PC-3 (cell line): ENCODE measurements at regions of chr5 and their contacts with region 1.

Region 1: GRCh38 chr5:111757355-111758283 is 625 bp upstream of the NREP start:
- DNase-seq: peak; percentile 90
- ATAC-seq: peak; percentile 71
- H3K4me3 ChIP-seq: peak overlapping the region; percentile 91
- H3K27ac ChIP-seq: peak overlapping the region; percentile 76
- H3K4me1 ChIP-seq: peaks cover 34% of the 10 kb centered on the region
- H3K27me3 ChIP-seq: no peaks in the 10 kb centered on the region
- CTCF ChIP-seq: peak; percentile 41

Region 2: GRCh38 chr5:111194925-111195324 is 562.7 kb before region 1 on chr5:
- CTCF ChIA-PET with region 1: no interaction called
- POLR2A ChIA-PET with region 1: no interaction called
- intact Hi-C with region 1: no loop called
- DNase-seq: no peak
- ATAC-seq: no peak
- H3K4me3 ChIP-seq: no peak overlapping the region
- H3K27ac ChIP-seq: no peak overlapping the region
- H3K4me1 ChIP-seq: no peaks in the 10 kb centered on the region
- H3K27me3 ChIP-seq: peaks cover 58% of the 10 kb centered on the region
- CTCF ChIP-seq: no peak

Region 3: DNA sequence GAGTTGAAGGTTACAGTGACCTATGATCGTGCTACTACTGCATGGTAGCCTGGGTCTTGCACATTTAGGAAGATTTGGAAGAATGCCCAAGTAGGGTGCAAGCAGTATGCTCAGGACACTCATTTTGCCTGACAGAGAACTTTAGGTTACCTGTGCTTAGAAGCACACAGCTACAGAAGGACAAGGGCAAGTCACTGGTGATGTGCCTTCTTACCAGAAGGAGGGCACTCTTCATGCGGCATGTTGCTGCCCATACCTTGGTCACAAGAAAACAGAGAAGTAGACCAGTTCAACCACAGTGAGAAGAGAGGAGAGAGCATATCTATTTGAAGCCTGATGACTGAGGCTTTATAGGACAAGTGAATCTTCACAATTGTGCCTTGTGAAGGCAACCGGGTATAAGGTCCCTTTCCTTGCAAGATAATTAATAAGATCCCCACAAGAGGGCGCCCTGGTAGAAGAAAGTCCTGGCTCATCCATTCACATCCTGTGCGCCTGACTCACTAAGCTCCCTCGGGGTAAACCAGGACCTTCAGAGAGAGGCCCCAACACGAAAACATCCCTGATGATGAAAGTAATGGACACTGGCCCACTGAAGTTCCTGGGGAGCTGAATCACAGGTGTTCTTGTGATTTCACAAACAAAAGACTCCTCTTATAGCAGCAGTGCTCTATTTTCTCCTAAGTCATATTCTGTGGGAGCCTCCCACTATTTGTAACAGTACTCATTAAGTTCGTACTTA is 207.2 kb before region 1 on chr5:
- CTCF ChIA-PET with region 1: interaction called, 5 read pairs
- POLR2A ChIA-PET with region 1: interaction called, 3 read pairs
- intact Hi-C with region 1: loop called (anchors 1 kb)
- DNase-seq: peak; percentile 97
- ATAC-seq: peak; percentile 89
- H3K4me3 ChIP-seq: no peak overlapping the region
- H3K27ac ChIP-seq: peak overlapping the region; percentile 54
- H3K4me1 ChIP-seq: peaks cover 21% of the 10 kb centered on the region
- H3K27me3 ChIP-seq: no peaks in the 10 kb centered on the region
- CTCF ChIP-seq: peak; percentile 80

Region 4: GRCh38 chr5:111635916-111636570 is 121.6 kb before region 1 on chr5:
- CTCF ChIA-PET with region 1: no interaction called
- POLR2A ChIA-PET with region 1: no interaction called
- intact Hi-C with region 1: no loop called
- DNase-seq: no peak
- ATAC-seq: no peak
- H3K4me3 ChIP-seq: no peak overlapping the region
- H3K27ac ChIP-seq: no peak overlapping the region
- H3K4me1 ChIP-seq: peaks cover 3% of the 10 kb centered on the region
- H3K27me3 ChIP-seq: no peaks in the 10 kb centered on the region
- CTCF ChIP-seq: no peak

Region 5: DNA sequence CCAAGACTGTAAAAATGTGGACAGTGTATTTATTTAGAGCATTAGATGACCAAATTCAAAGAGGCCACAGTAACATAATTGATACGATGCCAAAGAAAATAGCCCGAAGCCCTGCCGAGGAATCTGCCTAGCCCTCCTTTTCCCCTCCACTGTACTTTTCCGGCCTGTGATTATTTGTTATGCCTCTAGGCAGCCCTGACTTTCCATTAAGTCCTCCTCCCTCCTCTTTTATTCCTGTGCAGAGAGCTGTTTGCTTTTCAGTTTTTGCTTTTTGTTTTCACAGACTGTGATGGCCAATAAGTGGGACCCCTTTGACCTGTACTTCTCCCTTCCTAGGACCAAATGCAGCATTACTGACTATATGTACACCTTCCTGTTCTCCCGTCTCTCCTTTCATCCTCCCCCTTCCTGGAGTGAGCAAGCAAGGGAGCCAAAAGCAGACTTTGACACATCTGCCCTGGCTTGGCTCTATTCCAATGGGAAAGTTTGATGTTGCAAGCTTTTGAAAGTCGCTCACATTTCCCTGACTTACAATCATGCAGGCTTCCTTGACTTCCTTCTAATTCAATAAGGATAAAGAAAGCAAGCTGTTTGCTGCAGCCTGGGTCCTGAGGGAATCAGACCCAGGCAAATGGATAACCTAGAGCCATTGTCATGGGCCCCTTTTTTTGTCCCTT is 76.7 kb before region 1 on chr5:
- CTCF ChIA-PET with region 1: no interaction called
- POLR2A ChIA-PET with region 1: no interaction called
- intact Hi-C with region 1: loop called (anchors 1 kb)
- DNase-seq: peak; percentile 97
- ATAC-seq: peak; percentile 88
- H3K4me3 ChIP-seq: peak overlapping the region; percentile 50
- H3K27ac ChIP-seq: peak overlapping the region; percentile 87
- H3K4me1 ChIP-seq: peaks cover 30% of the 10 kb centered on the region
- H3K27me3 ChIP-seq: no peaks in the 10 kb centered on the region
- CTCF ChIP-seq: no peak

Region 6: DNA sequence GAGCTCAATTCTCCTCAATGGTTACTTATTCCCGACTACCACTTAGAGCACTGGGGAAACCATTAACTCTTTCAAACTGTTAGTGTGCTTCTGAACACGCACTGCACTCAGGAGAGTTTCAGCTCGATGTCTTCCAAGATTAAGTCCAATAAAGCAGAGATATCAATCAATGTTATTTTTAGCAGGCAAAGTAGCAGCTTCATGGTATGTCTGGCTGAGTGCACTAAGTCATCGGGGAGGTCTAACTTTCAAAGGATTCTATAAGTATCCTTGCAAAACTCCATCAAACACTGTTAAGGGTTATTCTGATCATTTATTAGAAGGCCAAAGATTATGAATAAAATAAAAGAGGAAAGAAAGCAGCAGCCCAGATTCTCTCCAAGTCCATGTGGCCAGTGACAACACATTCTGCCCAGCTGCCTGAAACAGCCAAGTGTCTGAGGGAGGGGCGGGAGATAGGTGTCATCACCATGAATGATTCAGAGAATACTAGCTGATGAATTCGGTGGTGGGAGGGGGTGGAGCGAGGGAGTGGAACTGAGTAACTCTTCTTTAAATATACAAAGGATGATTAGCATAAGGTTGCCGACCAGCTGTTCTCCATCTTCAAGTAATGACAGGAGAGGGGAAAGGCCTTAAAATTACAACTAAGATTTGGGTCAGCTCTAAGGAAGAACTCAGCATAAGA is 21.9 kb before region 1 on chr5:
- CTCF ChIA-PET with region 1: no interaction called
- POLR2A ChIA-PET with region 1: interaction called, 19 read pairs
- intact Hi-C with region 1: loop called (anchors 1 kb)
- DNase-seq: peak; percentile 83
- ATAC-seq: peak; percentile 76
- H3K4me3 ChIP-seq: no peak overlapping the region
- H3K27ac ChIP-seq: no peak overlapping the region
- H3K4me1 ChIP-seq: peaks cover 49% of the 10 kb centered on the region
- H3K27me3 ChIP-seq: no peaks in the 10 kb centered on the region
- CTCF ChIP-seq: no peak

Region 7: GRCh38 chr5:111997711-111998110 is 240.1 kb after region 1 on chr5:
- CTCF ChIA-PET with region 1: no interaction called
- POLR2A ChIA-PET with region 1: no interaction called
- intact Hi-C with region 1: loop called (anchors 10 kb)
- DNase-seq: peak; percentile 96
- ATAC-seq: peak; percentile 98
- H3K4me3 ChIP-seq: no peak overlapping the region
- H3K27ac ChIP-seq: peak overlapping the region; percentile 70
- H3K4me1 ChIP-seq: peaks cover 27% of the 10 kb centered on the region
- H3K27me3 ChIP-seq: no peaks in the 10 kb centered on the region
- CTCF ChIP-seq: no peak

Region 8: GRCh38 chr5:112160652-112161391 is 403.2 kb after region 1 on chr5:
- CTCF ChIA-PET with region 1: interaction called, 6 read pairs
- POLR2A ChIA-PET with region 1: interaction called, 4 read pairs
- intact Hi-C with region 1: loop called (anchors 5 kb)
- DNase-seq: peak; percentile 90
- ATAC-seq: peak; percentile 93
- H3K4me3 ChIP-seq: peak overlapping the region; percentile 95
- H3K27ac ChIP-seq: peak overlapping the region; percentile 19; the same call in 1 of the 2 replicates
- H3K4me1 ChIP-seq: peaks cover 9% of the 10 kb centered on the region; the same call in 1 of the 2 replicates
- H3K27me3 ChIP-seq: no peaks in the 10 kb centered on the region
- CTCF ChIP-seq: peak; percentile 94